Activated T-helper 1 cell treated with anti-CD3 and anti-CD28 coated beads, Interleukin-12 subunit alpha, Interleukin-12 subunit beta, Interleukin-2, Interleukin-4 antibody, amounts not matched to agents 30 ng/mL and 10 ng/mL and 1 ng/mL, durations not matched to agents 14 hours and 24 hours and 36 hours (primary cell): ENCODE measurements at regions of chr2 and their contacts with region 1.

Region 1: DNA sequence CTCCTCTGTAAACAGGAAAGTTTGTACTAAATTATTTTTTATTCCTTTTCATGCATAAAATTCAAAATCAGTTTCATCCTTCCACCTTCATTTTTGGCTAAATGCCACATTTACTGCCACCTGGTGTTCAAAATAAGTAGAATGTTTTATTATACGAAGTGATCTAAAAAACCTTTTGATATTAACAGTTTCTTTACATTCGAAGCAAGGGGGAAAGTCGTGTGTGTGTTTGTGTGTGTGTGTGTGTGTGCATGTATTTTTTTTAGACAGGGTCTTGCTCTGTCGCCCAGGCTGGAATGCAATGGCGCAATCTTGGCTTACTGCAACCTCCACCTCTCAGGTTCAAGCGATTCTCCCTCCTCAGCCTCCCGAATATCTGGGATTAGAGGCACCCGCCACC is 9.0 kb upstream of the SCN9A start:
- DNase-seq: no peak
- H3K4me3 Mint-ChIP-seq: no peak overlapping the region
- H3K27ac Mint-ChIP-seq: no peak overlapping the region
- H3K4me1 Mint-ChIP-seq: no peaks in the 10 kb centered on the region
- H3K27me3 Mint-ChIP-seq: no peaks in the 10 kb centered on the region

Region 2: GRCh38 chr2:166170356-166170755 is 214.4 kb before region 1 on chr2:
- intact Hi-C with region 1: loop called (anchors 10 kb)
- DNase-seq: no peak
- H3K4me3 Mint-ChIP-seq: no peak overlapping the region
- H3K27ac Mint-ChIP-seq: no peak overlapping the region
- H3K4me1 Mint-ChIP-seq: no peaks in the 10 kb centered on the region
- H3K27me3 Mint-ChIP-seq: peaks cover 2% of the 10 kb centered on the region

Region 3: GRCh38 chr2:166321076-166321475 is 63.7 kb before region 1 on chr2:
- intact Hi-C with region 1: no loop called
- DNase-seq: no peak
- H3K4me3 Mint-ChIP-seq: no peak overlapping the region
- H3K27ac Mint-ChIP-seq: no peak overlapping the region
- H3K4me1 Mint-ChIP-seq: no peaks in the 10 kb centered on the region
- H3K27me3 Mint-ChIP-seq: no peaks in the 10 kb centered on the region

Region 4: DNA sequence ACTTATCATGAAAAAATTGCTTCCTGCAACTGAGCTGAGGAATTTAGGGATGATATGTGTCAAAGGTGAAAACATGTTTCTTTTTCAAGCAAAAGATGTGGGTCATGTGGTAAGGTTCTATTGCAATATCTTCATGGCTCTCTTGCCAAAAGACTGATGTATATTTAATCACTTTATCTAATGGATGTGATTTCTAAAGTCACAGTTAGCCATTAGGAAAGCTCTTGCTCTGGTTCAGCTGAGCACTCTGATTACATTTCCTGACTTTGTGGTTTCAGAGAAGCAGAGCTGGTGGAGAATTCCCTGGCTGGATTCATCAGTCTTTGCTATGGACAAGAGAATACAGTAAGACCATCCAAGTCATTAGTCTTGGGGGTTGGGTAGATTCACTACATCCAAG is 33.5 kb before region 1 on chr2:
- intact Hi-C with region 1: loop called (anchors 5 kb)
- DNase-seq: no peak
- H3K4me3 Mint-ChIP-seq: no peak overlapping the region
- H3K27ac Mint-ChIP-seq: no peak overlapping the region
- H3K4me1 Mint-ChIP-seq: no peaks in the 10 kb centered on the region
- H3K27me3 Mint-ChIP-seq: peaks cover 2% of the 10 kb centered on the region

Region 5: GRCh38 chr2:166361351-166362153 is 23.2 kb before region 1 on chr2:
- intact Hi-C with region 1: loop called (anchors 1 kb)
- DNase-seq: no peak
- H3K4me3 Mint-ChIP-seq: no peak overlapping the region
- H3K27ac Mint-ChIP-seq: no peak overlapping the region
- H3K4me1 Mint-ChIP-seq: no peaks in the 10 kb centered on the region
- H3K27me3 Mint-ChIP-seq: no peaks in the 10 kb centered on the region